Psoas muscle (tissue), 8 donors: ENCODE measurements at regions of chr19 and their contacts with region 1.

Region 1: DNA sequence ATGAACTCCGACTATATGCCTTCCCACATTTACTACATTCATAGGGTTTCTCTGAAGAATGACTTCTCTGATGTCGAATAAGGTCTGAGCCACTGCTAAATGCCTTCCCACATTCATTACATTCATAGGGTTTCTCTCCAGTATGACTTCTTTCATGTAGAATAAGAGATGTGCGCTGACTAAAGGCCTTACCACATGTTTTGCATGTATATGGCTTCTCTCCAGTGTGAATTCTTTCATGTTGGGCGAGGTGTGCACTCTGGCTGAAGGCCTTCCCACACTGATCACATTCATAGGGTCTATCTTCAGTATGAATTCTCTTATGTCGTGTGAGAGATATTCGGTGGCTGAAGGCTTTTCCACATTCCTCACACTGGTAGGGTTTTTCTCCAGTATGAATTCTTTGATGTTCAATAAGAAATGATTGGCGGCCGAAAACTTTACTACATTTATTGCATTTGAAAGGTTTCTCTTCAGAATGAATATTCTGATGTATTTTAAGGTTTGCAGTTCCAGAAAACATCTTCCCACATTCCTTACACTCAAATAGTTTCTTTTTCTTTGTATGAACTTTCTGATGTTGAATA is 35.8 kb downstream of the ZNF667 start:
- DNase-seq: no peak
- ATAC-seq: no peak
- H3K4me3 ChIP-seq: no peak overlapping the region
- H3K27ac ChIP-seq: no peak overlapping the region
- H3K4me1 ChIP-seq: no peaks in the 10 kb centered on the region
- H3K27me3 ChIP-seq: no peaks in the 10 kb centered on the region
- CTCF ChIP-seq: no peak

Region 2: DNA sequence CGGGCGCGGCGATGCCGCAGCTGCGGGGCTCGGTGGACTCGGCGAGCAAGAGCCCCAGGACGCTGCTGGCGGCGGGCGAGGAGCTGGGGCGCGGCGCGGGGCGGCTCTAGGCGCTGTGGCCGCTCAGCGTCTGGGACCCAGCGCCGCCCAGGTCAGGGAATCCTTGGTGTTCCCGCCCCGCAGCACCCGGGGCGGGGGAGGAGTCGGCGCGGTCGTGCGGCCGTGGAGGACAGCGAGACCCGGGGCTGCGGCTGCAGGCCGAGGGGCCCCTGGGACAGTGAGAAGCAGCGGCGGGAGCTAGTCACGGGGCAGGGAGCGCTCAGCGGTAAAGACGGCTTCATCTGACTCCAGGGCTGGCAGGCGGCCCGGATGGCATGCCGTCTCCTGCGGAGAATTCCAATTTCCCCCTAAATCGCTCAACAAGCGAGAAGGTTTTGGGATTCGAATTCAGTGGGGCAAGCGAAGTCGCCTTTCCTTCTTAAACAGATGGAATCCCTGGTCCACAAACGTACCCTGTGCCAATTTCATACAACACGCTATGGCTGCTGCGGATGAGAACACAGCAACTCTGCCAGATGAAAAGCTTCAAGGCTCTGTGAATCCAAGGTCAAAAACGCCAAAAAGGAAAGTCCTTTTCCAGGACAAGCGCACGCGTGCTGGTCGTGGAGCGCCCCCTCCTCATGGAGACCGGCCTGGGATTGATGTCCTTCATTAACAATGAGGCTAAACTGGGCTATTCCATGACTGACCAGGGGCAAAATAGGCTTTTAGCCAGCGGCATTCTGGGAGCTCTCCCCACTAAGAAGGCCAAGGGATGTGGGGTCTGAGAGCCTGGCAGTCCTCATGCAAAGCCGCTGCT is 1223.2 kb after region 1 on chr19:
- intact Hi-C with region 1: loop called in 1 of 2 experiments (anchors 5 kb)
- DNase-seq: peak; percentile 59 to 64
- ATAC-seq: peak; percentile 30 to 75 (median 62)
- H3K4me3 ChIP-seq: peak overlapping the region; percentile 70
- H3K27ac ChIP-seq: peak overlapping the region; percentile 36
- H3K4me1 ChIP-seq: peaks cover 3% of the 10 kb centered on the region
- H3K27me3 ChIP-seq: peaks cover 0 to 56% (median 6%) of the 10 kb centered on the region in 3 donors
- CTCF ChIP-seq: no peak